ENCODE measurements at regions of chr16 and their contacts with region 1.

Region 1: GRCh38 chr16:3065069-3065741 is at the start of gene IL32:
- DNase-seq: peak; percentile 69
- CTCF ChIP-seq: no peak

Region 2: GRCh38 chr16:3161136-3162018 is 96.2 kb after region 1 on chr16:
- in situ Hi-C with region 1: loop called (anchors 10 kb)
- DNase-seq: no peak
- CTCF ChIP-seq: no peak

Measured in GM13977 (cell line).